ENCODE measurements at regions of chr11 and their contacts with region 1.

Region 1: DNA sequence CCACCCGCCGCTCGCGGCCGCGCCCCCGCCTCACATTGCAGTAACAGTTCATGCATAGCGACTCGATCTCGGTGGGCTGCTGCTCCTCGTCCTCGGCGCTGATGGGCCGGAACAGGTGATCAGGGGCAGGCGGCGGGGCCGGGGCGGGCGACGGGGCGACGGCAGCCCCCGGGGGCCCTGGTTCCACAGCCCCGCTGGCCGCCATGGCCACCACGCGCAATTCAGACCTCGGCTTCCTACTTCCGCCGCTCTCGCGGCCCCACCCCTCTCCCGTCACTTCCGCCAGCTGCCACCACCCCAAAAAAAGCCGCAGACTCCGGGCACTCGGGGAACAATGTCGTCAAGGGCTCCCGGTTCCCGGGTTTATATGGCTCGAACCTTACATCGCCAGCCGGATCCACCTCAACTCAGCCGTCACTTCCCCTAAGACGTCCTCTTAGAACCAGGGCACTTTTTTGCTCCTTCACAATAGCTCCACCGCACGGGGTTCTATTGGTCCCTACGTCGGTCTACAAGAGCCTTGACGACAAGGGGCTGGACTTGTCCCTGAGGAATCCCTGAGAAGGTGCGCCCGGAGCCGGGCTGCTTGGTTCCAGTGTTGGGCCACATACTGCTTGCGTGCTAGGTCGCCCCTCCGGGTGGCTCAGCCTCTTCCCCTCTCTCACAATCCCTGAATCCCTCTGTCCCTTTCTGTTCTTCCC is at the start of gene ZPR1:
- DNase-seq: no peak
- H3K4me3 ChIP-seq: peak within 1 kb of the TSS; percentile 77
- CTCF ChIP-seq: no peak

Region 2: DNA sequence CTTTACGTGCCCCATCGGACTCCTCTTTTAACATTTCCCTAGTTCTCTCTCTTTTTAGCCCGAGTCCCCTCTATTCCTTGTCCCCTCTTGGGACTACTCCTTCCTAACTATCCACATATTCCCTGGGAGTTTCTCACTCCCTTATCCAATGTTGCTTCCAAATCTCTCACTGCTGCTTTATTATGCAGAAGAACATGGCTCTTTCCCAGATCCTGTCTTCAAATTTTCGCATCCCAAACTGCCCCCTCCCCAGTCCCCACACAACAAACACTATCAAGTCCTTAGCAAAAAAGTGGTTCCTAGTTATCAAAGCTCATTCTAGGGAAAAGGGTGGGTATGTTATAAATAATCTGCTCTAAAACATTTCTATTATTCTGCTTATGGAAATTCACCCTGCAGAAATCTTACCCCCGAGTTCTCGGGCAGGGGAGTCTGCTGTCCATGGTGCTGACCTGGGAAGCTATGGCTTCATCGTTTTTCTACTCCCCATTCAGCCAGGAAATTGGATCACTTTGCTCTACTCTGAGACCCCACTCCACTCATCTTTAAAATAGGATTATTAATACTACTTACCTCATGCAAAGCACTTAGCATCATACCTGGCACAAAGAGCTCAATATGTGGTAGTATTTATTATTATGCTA is 408.6 kb before region 1 on chr11:
- CTCF ChIA-PET with region 1: no interaction called
- POLR2A ChIA-PET with region 1: no interaction called
- DNase-seq: no peak
- H3K4me3 ChIP-seq: no peak overlapping the region
- CTCF ChIP-seq: no peak

Region 3: GRCh38 chr11:116798368-116798767 is 10.4 kb after region 1 on chr11:
- CTCF ChIA-PET with region 1: interaction called, 28 read pairs
- POLR2A ChIA-PET with region 1: no interaction called
- DNase-seq: no peak
- H3K4me3 ChIP-seq: no peak overlapping the region
- CTCF ChIP-seq: no peak

Region 4: DNA sequence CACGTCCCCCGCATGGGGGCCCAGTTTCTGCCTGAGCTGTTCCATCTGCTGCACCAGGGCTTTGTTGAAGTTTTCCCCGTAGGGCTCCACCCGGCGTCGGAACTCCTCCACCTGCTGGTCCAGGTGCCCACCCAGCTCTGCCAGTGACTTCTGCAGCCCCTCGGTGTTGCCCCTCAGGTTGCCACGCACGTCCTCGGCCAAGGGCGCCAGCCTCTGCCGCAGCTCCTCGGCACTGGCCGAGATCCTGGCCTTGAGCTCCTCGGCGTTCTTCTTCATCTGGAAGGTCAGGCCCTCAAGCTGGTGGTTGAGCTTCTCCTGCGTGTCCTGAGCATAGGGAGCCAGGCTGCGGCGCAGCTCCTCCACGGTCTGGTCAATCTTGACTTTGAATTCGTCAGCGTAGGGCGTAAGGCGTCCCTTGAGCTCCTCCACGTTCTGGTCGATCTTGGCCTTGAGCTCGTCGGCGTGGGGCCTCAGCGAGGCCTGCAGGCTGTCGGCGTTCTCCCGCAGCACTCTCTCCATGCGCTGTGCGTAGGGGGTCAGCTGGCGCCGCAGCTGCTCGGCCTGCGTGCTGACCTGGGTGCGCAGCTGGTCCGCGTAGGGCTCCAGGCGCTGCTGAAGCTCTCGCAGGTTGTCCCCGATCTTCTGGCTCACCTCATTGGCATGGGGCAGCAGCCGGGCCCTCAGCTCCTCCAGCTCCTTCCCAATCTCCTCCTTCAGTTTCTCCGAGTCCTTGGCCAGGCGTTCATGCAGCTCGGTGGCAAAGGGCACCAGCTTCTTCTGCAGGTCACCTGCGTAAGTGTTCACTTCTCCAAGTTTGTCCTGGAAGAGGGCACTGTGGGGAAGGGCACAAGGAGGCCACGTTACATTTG is 33.3 kb after region 1 on chr11:
- CTCF ChIA-PET with region 1: interaction called, 13 read pairs
- POLR2A ChIA-PET with region 1: no interaction called
- DNase-seq: no peak
- H3K4me3 ChIP-seq: no peak overlapping the region
- CTCF ChIP-seq: no peak

Region 5: GRCh38 chr11:116853461-116854073 is 65.6 kb after region 1 on chr11:
- CTCF ChIA-PET with region 1: interaction called, 24 read pairs
- POLR2A ChIA-PET with region 1: interaction called, 3 read pairs
- DNase-seq: peak; percentile 80
- H3K4me3 ChIP-seq: no peak overlapping the region
- CTCF ChIP-seq: no peak

Region 6: GRCh38 chr11:116895048-116895757 is 107.3 kb after region 1 on chr11:
- CTCF ChIA-PET with region 1: no interaction called
- POLR2A ChIA-PET with region 1: no interaction called
- DNase-seq: no peak
- H3K4me3 ChIP-seq: no peak overlapping the region
- CTCF ChIP-seq: peak; percentile 33

Region 7: GRCh38 chr11:117098269-117099232 is 310.6 kb after region 1 on chr11 and contains the start of gene SIK3:
- CTCF ChIA-PET with region 1: interaction called, 472 read pairs
- POLR2A ChIA-PET with region 1: interaction called, 6 read pairs
- DNase-seq: no peak
- H3K4me3 ChIP-seq: peak within 1 kb of the TSS; percentile 83
- CTCF ChIP-seq: peak; percentile 80

Region 8: DNA sequence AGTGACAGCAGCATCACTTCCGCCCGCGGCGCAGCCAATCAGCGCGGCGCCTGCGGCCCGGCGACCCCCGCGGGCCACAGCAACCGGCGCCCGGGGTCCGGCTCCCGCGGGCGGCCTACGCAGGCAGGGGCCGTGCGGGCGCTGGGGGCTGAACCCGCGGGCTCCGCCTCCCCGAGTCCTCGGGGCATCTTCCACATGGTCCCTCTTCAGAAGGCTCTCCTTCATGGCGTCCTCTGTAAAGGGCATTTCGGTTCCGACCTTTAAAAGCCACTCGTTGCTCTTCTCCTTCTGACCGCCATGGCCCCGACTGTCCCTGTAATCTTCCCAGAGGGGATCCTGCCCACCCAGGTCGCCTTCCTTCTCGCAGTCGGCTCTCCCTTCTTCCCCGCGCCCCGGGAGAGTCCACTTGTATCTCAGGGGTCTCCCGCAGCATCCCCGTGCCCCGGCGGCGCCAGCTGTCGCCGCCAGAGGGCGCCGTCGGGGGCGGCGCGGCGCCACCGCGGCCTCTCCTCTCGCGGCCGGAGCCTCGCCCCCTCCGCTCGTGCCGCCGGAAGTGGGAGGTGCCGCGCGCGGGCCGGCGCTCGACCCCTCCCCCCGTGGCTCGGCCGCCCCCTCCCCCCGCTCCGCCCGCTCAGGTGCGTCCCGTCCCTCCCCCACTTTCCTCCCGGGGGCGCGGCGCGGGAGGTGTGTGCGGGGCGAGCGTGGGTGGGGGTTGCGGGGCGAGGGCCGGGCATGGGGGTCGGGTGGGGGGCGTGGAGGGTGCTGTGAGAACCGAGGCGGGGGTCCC is 444.3 kb after region 1 on chr11 and contains the start of gene RNF214:
- CTCF ChIA-PET with region 1: interaction called, 119 read pairs
- POLR2A ChIA-PET with region 1: no interaction called
- DNase-seq: no peak
- H3K4me3 ChIP-seq: peak within 1 kb of the TSS; percentile 91
- CTCF ChIP-seq: peak; percentile 62

Measured in AG04449 (cell line).